ENCODE measurements at regions of chr13 and their contacts with region 1.

Region 1: DNA sequence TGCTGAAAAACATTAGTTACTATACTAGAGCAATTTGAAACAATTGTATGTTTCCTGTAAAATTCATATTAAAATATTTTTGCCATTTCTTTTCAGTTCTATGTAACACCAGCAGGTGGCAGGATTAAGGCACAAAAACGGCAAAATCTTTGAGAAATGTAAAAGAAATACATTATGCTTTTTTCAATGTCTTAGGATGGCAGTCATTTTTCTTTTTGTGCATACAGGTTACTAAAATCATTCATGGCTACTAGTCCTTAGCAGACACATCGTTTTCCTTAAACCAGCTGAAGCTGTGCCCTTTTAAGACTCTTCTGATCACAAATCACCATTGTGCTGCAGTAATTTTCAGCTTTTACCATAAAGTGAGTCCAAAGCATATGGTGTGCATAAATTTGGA is 800.7 kb upstream of the SLITRK5 start:
- DNase-seq: no peak
- H3K4me3 Mint-ChIP-seq: no peak overlapping the region
- H3K27ac Mint-ChIP-seq: no peak overlapping the region
- H3K4me1 Mint-ChIP-seq: no peaks in the 10 kb centered on the region
- H3K27me3 Mint-ChIP-seq: no peaks in the 10 kb centered on the region

Region 2: GRCh38 chr13:87274209-87274819 is 403.9 kb after region 1 on chr13:
- intact Hi-C with region 1: loop called (anchors 2 kb)
- DNase-seq: no peak
- H3K4me3 Mint-ChIP-seq: no peak overlapping the region
- H3K27ac Mint-ChIP-seq: no peak overlapping the region
- H3K4me1 Mint-ChIP-seq: no peaks in the 10 kb centered on the region
- H3K27me3 Mint-ChIP-seq: no peaks in the 10 kb centered on the region

Region 3: DNA sequence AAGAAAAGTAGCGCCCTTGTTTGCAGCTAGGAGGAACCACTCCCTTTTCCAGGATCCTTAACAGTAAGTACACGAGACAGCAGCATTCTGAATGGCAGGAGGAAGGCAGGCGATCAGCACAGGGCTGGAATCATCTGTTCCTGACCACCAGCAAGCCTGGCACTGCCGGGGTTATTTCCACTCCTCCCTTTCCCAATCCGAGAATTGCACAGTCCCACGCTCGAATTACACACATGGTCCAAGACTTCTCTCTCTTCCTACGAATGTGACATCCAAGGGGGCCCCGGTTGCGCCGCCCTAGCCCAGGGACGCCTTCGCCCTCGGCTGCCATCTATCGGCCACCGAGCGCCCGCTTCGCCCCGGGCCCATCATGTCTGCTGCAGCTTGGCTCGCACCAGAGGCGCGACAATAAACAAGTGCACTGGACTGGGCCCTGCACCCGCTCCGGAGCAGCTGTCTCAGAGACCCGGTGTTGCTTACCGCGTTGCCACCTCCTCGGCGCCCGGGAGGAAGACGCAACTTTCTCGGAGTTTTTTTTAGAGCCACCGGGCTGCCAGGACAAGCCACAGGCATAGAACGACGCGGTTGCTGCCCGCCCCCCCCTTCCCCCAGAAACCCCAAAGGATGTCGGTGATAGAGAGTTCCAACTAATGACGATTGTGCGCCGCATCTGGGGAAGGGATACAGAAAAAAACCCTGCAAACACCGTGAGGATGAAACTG is 800.7 kb after region 1 on chr13 and contains the start of gene SLITRK5:
- intact Hi-C with region 1: loop called (anchors 10 kb)
- DNase-seq: peak; percentile 27
- H3K4me3 Mint-ChIP-seq: peak within 1 kb of the TSS; percentile 60
- H3K27ac Mint-ChIP-seq: no peak within 1 kb of the TSS
- H3K4me1 Mint-ChIP-seq: peaks cover 10% of the 10 kb centered on the region
- H3K27me3 Mint-ChIP-seq: peaks cover 33% of the 10 kb centered on the region
- total RNA-seq, gene SLITRK5: not detected in 2 replicates

Measured in activated T-helper 1 cell treated with anti-CD3 and anti-CD28 coated beads, Interleukin-12 subunit alpha, Interleukin-12 subunit beta, Interleukin-2, Interleukin-4 antibody, amounts not matched to agents 30 ng/mL and 10 ng/mL and 1 ng/mL, durations not matched to agents 14 hours and 24 hours and 36 hours (primary cell).